ENCODE measurements at regions of chr9 and their contacts with region 1.

Region 1: GRCh38 chr9:123265833-123266232 is 2.6 kb downstream of the STRBP start:
- DNase-seq: no peak
- CTCF ChIP-seq: no peak

Region 2: GRCh38 chr9:122718038-122718437 is 547.8 kb before region 1 on chr9:
- CTCF ChIA-PET with region 1: no interaction called
- POLR2A ChIA-PET with region 1: no interaction called
- DNase-seq: no peak
- CTCF ChIP-seq: no peak

Region 3: GRCh38 chr9:122860317-122861142 is 405.3 kb before region 1 on chr9:
- CTCF ChIA-PET with region 1: no interaction called
- POLR2A ChIA-PET with region 1: interaction called, 10 read pairs
- DNase-seq: no peak
- CTCF ChIP-seq: no peak

Region 4: GRCh38 chr9:123246534-123246933 is 19.3 kb before region 1 on chr9:
- CTCF ChIA-PET with region 1: interaction called, 15 read pairs
- POLR2A ChIA-PET with region 1: no interaction called
- DNase-seq: no peak
- CTCF ChIP-seq: no peak

Region 5: DNA sequence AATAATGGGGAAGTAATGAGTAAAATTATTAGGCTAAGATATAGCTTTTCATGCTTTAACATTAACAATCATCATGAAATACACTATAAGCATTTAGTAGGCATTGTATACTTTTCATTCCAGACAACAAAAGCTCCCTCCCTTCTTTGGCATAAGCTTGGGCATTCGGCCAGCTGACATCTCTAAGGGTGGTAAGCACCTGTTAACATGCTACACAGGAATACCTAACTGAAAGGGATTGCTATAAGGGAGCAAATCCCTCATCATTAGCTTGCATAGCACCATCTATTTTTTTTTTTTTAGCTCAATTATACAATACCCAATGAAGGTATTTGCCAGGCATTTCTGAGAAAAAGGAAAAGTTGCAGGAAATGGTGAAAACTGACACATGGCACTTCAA is 14.1 kb before region 1 on chr9:
- CTCF ChIA-PET with region 1: interaction called, 15 read pairs
- POLR2A ChIA-PET with region 1: no interaction called
- DNase-seq: no peak
- CTCF ChIP-seq: no peak

Measured in GM10248 (cell line).